HepG2 (cell line): ENCODE measurements at regions of chr2 and their contacts with region 1.

Region 1: GRCh38 chr2:218360447-218360846 is 3.8 kb downstream of the CATIP start:
- DNase-seq: no peak
- ATAC-seq: no peak
- H3K4me3 ChIP-seq: no peak overlapping the region
- H3K27ac ChIP-seq: no peak overlapping the region
- H3K4me1 ChIP-seq: peaks cover 65% of the 10 kb centered on the region
- H3K27me3 ChIP-seq: no peaks in the 10 kb centered on the region; a peak in 3 of 5 replicates
- CTCF ChIP-seq: no peak
- EP300 ChIP-seq: no peak
- POLR2A ChIP-seq: no peak
- RAD21 ChIP-seq: no peak

Region 2: DNA sequence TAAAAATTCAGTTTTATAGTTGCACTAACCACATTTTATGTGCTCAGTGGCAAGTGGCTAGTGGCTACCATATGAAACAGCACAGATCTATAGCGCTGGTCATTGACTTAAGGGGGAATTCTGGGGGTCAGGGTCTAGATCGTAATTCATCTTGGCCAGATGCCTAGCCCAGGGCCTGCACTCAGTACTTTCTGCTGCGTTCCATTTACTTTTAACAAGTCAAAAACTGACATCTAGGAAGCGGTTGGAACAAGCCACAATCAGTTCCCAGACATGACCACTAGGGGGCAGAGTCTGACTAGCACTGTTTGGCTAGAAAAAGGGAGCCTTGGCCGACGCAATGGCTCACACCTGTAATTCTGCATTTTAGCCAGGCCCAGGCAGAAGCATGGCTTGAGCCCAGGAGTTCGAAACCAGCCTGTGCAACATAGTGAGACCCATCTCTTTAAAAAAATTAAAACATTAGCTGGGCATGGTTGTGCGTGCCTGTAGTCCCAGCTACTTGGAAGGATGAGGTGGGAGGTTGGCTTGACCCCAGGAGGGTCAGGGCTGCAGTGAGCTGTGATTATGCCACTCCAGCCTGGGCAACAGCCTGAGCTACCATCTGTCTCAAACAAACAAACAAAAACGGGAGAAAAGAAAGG is 59.1 kb before region 1 on chr2:
- CTCF ChIA-PET with region 1: interaction called, 59 read pairs
- POLR2A ChIA-PET with region 1: interaction called, 8 read pairs
- in situ Hi-C with region 1: loop called (anchors 5 kb)
- intact Hi-C with region 1: loop called (anchors 1 kb)
- DNase-seq: peak; percentile 90
- ATAC-seq: peak; percentile 64
- H3K4me3 ChIP-seq: no peak overlapping the region
- H3K27ac ChIP-seq: peak overlapping the region; percentile 25
- H3K4me1 ChIP-seq: peaks cover 63% of the 10 kb centered on the region
- H3K27me3 ChIP-seq: no peaks in the 10 kb centered on the region
- CTCF ChIP-seq: peak; percentile 99
- EP300 ChIP-seq: no peak
- POLR2A ChIP-seq: no peak
- RAD21 ChIP-seq: peak; percentile 99

Region 3: DNA sequence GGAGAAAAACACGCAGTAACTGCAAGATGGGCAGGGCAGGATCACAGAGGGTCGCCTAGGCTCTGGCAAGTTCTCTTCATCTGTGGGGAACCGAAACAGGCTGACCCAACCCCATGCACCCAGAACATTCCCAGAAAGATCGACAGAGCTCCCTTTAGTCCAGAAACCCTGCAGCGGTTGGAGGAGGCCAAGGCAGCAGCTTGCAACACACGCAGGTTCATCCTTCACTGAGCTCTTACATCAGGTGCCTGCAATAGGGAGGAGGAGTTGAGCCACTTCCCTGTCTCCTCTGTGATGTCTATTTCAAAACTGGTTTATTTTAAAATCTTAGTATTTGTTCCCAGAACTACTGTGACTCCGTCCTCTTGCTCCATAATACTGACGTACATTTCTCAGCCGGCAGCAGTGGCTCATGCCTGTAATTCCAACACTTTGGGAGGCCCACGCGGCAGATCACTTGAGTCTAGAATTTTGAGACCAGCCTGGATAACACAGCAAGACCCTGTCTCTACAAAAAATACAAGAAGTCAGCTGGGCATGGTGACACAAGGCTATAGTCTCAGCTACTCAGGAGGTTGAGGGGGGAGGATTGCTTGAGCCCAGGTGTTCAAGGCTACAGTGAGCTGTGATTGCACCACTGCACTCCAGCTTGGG is 10.1 kb after region 1 on chr2:
- CTCF ChIA-PET with region 1: no interaction called
- POLR2A ChIA-PET with region 1: interaction called, 11 read pairs
- in situ Hi-C with region 1: no loop called
- intact Hi-C with region 1: no loop called
- DNase-seq: peak; percentile 57
- ATAC-seq: peak; percentile 69
- H3K4me3 ChIP-seq: peak overlapping the region in 1 of 3 experiments; percentile 0; a peak in 1 of 6 replicates
- H3K27ac ChIP-seq: no peak overlapping the region
- H3K4me1 ChIP-seq: peaks cover 49% of the 10 kb centered on the region
- H3K27me3 ChIP-seq: peaks cover 2% of the 10 kb centered on the region in 2 experiments; a peak in 2 of 5 replicates
- CTCF ChIP-seq: no peak
- EP300 ChIP-seq: no peak
- POLR2A ChIP-seq: no peak
- RAD21 ChIP-seq: no peak

Region 4: GRCh38 chr2:218466016-218466521 is 105.6 kb after region 1 on chr2:
- CTCF ChIA-PET with region 1: no interaction called
- POLR2A ChIA-PET with region 1: no interaction called
- in situ Hi-C with region 1: no loop called
- intact Hi-C with region 1: no loop called
- DNase-seq: peak; percentile 34
- ATAC-seq: peak; percentile 69
- H3K4me3 ChIP-seq: no peak overlapping the region
- H3K27ac ChIP-seq: no peak overlapping the region
- H3K4me1 ChIP-seq: 0 out of 2 replicates have a peak, but pooled peaks cover 3% of the 10 kb centered on the region
- H3K27me3 ChIP-seq: no peaks in the 10 kb centered on the region
- CTCF ChIP-seq: peak; percentile 68
- EP300 ChIP-seq: no peak
- POLR2A ChIP-seq: no peak
- RAD21 ChIP-seq: no peak